ENCODE measurements at regions of chr16 and their contacts with region 1.

Region 1: GRCh38 chr16:30075507-30076275 is at the start of gene PPP4C:
- DNase-seq: peak; percentile 79 to 96 (median 86)
- ATAC-seq: peak; percentile 87
- H3K4me3 ChIP-seq: peak within 1 kb of the TSS; percentile 98
- H3K4me3 Mint-ChIP-seq: peak within 1 kb of the TSS; percentile 98
- H3K27ac ChIP-seq: peak within 1 kb of the TSS; percentile 77 to 80
- H3K27ac Mint-ChIP-seq: peak within 1 kb of the TSS; percentile 96
- H3K4me1 ChIP-seq: peaks cover 38% of the 10 kb centered on the region
- H3K4me1 Mint-ChIP-seq: peaks cover 39% of the 10 kb centered on the region
- H3K27me3 ChIP-seq: no peaks in the 10 kb centered on the region
- H3K27me3 Mint-ChIP-seq: no peaks in the 10 kb centered on the region
- CTCF ChIP-seq: no peak
- total RNA-seq, gene PPP4C: 83.9 to 87.3 TPM

Region 2: DNA sequence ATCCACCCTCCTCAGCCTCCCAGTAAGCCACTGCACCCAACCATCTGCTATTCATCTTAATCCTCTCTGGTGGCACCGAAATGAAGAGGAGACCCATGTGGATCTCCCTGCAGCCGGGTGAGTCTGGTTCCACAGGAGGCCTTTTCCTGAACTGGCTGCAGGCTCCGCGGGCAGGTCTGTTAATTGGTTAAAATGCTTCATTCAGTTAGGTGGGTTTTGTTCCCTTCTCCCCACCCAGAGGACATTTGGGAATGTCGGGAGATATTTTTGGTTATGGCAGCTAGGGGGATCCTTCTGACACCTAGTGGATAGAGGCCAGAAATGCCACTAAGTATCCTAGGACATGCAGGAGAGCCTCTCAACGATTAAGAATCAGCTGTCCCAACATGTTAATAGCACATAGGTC is 346.6 kb before region 1 on chr16:
- CTCF ChIA-PET with region 1: no interaction called
- POLR2A ChIA-PET with region 1: no interaction called
- intact Hi-C with region 1: no loop called
- DNase-seq: peak in 2 of 14 experiments; percentile 31 to 36
- ATAC-seq: no peak
- H3K4me3 ChIP-seq: no peak overlapping the region
- H3K4me3 Mint-ChIP-seq: no peak overlapping the region
- H3K27ac ChIP-seq: no peak overlapping the region
- H3K27ac Mint-ChIP-seq: no peak overlapping the region
- H3K4me1 ChIP-seq: peaks cover 28% of the 10 kb centered on the region
- H3K4me1 Mint-ChIP-seq: peaks cover 28% of the 10 kb centered on the region
- H3K27me3 ChIP-seq: no peaks in the 10 kb centered on the region
- H3K27me3 Mint-ChIP-seq: no peaks in the 10 kb centered on the region
- CTCF ChIP-seq: peak; percentile 58

Region 3: DNA sequence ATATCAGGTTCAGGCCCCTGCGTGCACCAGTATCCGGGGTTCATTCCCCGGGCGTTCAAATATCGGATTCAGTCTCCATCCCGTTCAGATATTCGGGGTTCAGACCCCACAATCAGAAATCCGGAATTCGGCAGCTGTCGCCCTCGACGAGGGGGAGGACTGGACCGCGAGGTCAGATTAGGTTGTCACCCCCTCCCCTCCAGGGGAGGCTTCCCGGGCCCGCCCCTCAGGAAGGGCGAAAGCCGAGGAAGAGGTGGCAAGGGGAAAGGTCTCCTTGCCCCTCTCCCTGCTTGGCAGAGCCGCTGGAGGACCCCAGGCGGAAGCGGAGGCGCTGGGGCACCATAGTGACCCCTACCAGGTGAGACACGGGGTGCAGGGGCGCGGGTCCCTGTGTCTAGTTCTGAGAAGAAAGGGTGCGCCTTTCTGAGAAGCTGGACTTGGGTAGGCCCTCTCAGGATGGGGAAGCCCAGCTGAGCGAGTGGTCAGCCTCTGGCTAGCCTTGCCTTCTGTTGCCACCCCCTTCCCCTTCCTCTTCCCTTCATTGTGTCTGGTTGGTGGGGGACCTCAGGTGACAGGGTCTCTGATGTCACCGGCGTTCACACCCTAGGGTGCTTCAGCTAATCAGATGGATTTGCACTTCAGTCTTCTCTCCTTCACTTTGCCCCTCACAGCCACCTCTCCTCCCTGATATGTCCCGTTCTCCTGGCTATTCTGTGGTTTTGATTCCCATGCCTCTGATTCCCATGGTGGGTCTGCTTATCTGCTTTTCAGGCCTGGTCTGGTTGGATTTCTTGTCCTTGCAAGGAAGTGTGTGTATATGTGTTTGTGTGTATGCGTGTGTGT is 101.2 kb before region 1 on chr16:
- CTCF ChIA-PET with region 1: no interaction called
- POLR2A ChIA-PET with region 1: no interaction called
- intact Hi-C with region 1: no loop called
- DNase-seq: peak in 3 of 14 experiments; percentile 28 to 54 (median 49)
- ATAC-seq: no peak
- H3K4me3 ChIP-seq: peak overlapping the region; percentile 99
- H3K4me3 Mint-ChIP-seq: peak overlapping the region; percentile 98
- H3K27ac ChIP-seq: peak overlapping the region; percentile 70 to 83
- H3K27ac Mint-ChIP-seq: peak overlapping the region; percentile 84
- H3K4me1 ChIP-seq: peaks cover 39% of the 10 kb centered on the region
- H3K4me1 Mint-ChIP-seq: peaks cover 50% of the 10 kb centered on the region
- H3K27me3 ChIP-seq: no peaks in the 10 kb centered on the region
- H3K27me3 Mint-ChIP-seq: no peaks in the 10 kb centered on the region
- CTCF ChIP-seq: no peak

Region 4: GRCh38 chr16:30152517-30152916 is 76.8 kb after region 1 on chr16:
- CTCF ChIA-PET with region 1: no interaction called
- POLR2A ChIA-PET with region 1: no interaction called
- intact Hi-C with region 1: no loop called
- DNase-seq: no peak
- ATAC-seq: no peak
- H3K4me3 ChIP-seq: no peak overlapping the region
- H3K4me3 Mint-ChIP-seq: no peak overlapping the region
- H3K27ac ChIP-seq: no peak overlapping the region
- H3K27ac Mint-ChIP-seq: no peak overlapping the region
- H3K4me1 ChIP-seq: no peaks in the 10 kb centered on the region
- H3K4me1 Mint-ChIP-seq: no peaks in the 10 kb centered on the region
- H3K27me3 ChIP-seq: no peaks in the 10 kb centered on the region
- H3K27me3 Mint-ChIP-seq: no peaks in the 10 kb centered on the region
- CTCF ChIP-seq: no peak

Region 5: DNA sequence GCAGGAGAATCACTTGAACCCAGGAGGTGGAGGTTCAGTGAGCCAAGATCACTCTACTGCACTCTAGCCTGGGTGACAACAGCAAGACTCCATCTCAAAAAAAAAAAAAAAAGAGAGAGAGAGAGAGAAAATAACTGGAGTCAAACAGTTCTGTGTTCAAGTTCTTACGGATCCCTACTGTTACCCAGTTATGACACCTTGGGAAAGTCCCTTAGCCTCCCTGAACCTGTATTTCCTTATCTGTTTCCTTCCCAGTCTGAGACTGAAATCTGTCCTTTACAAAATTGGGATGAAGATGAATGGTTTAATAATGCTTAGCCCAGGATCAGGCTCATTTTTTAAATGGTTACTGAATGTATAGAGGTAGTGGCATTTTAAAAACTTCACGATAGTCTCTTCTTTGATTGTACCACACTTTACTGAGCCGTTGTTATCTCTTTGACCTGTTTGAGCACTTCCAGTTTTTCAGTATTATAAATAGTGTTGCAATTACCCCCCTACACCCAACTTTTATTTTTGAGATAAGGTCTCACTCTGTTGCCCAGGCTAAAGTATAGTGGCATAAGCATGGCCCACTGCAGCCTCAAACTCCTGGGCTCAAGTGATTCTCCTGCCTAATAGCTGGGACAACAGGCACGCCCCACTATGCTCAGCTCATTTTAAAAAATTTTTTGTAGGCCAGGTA is 433.5 kb after region 1 on chr16:
- CTCF ChIA-PET with region 1: no interaction called
- POLR2A ChIA-PET with region 1: no interaction called
- intact Hi-C with region 1: loop called in 1 of 2 experiments (anchors 10 kb)
- DNase-seq: no peak
- ATAC-seq: no peak
- H3K4me3 ChIP-seq: no peak overlapping the region
- H3K4me3 Mint-ChIP-seq: no peak overlapping the region
- H3K27ac ChIP-seq: no peak overlapping the region
- H3K27ac Mint-ChIP-seq: peak overlapping the region; percentile 56
- H3K4me1 ChIP-seq: peaks cover 5% of the 10 kb centered on the region
- H3K4me1 Mint-ChIP-seq: peaks cover 5% of the 10 kb centered on the region
- H3K27me3 ChIP-seq: no peaks in the 10 kb centered on the region
- H3K27me3 Mint-ChIP-seq: no peaks in the 10 kb centered on the region
- CTCF ChIP-seq: no peak